ENCODE measurements at regions of chr3 and their contacts with region 1.

Region 1: GRCh38 chr3:117019082-117019713 is 309.6 kb downstream of the TUSC7 start:
- DNase-seq: peak; percentile 72
- ATAC-seq: peak; percentile 85
- H3K4me3 ChIP-seq: no peak overlapping the region
- H3K27ac ChIP-seq: no peak overlapping the region
- H3K4me1 ChIP-seq: no peaks in the 10 kb centered on the region
- H3K27me3 ChIP-seq: peaks cover 51% of the 10 kb centered on the region
- CTCF ChIP-seq: peak; percentile 92

Region 2: DNA sequence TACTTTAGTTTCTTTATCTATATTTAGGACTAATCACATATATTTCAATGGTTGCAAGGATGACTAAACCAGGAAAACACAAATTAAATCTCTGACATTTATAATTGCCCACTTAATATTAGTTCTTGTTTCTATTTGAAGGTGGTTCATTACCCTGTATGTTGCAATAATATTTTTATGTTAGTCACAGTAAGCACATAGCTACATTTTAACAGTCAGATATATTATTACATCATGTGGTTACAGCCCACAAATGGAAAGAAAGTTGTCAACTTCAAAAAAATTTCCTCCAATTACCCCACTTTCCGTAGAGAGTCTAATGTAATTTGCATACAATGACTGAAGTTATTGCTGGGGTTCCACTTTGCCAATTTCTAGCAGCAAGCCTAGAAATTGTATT is 195.0 kb before region 1 on chr3:
- CTCF ChIA-PET with region 1: no interaction called
- POLR2A ChIA-PET with region 1: no interaction called
- intact Hi-C with region 1: no loop called
- DNase-seq: no peak
- ATAC-seq: no peak
- H3K4me3 ChIP-seq: no peak overlapping the region
- H3K27ac ChIP-seq: no peak overlapping the region
- H3K4me1 ChIP-seq: no peaks in the 10 kb centered on the region
- H3K27me3 ChIP-seq: no peaks in the 10 kb centered on the region
- CTCF ChIP-seq: no peak

Region 3: DNA sequence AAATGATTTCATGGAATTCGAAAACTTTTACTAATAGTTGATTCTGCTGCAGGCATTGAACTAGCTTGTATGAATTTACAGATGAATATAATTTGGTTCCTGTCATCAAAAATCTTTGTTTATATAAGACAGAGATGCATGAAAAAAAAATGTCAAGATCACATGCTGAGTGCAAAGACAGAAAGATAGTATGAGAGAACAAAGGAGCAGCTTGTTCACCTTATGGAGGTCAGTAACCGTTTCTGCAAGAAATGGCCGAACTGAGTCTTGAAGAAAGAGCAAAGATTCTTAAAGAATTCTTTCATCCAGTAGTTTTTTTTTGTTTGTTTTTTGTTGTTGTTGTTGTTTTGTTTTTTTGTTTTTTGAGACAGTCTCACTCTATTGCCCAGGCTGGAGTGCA is 141.0 kb after region 1 on chr3:
- CTCF ChIA-PET with region 1: no interaction called
- POLR2A ChIA-PET with region 1: no interaction called
- intact Hi-C with region 1: no loop called
- DNase-seq: no peak
- ATAC-seq: no peak
- H3K4me3 ChIP-seq: no peak overlapping the region
- H3K27ac ChIP-seq: no peak overlapping the region
- H3K4me1 ChIP-seq: no peaks in the 10 kb centered on the region
- H3K27me3 ChIP-seq: no peaks in the 10 kb centered on the region
- CTCF ChIP-seq: no peak

Region 4: DNA sequence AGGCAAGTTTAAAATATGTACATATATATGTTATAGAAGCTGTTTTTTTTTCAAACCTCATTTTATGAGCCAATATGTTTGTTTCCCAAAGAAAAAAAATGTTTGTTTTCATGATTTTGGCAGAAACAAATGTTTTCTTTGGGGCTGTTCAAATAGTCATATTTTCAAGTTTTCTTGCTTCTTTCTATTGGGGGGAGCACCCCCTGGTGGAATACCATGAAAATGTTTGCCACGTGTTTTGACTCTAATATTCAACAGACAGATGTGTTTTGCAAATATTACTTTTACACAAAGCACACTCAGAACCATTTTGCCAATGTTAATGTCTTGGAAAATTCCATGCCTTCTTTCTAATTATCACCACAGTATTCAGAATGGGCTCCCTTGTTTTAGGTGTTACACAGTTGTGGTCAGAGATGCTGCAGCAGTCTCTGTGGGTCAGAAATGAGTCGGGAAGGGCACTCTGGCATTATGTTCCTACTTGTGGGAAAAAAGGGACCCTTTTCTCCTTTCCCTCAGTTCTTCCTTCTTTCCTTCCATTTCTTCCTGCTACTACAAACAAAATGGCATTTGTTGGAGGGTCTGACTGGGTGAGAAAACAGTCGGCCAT is 507.4 kb after region 1 on chr3:
- CTCF ChIA-PET with region 1: no interaction called
- POLR2A ChIA-PET with region 1: no interaction called
- intact Hi-C with region 1: loop called (anchors 5 kb)
- DNase-seq: peak; percentile 17
- ATAC-seq: no peak
- H3K4me3 ChIP-seq: no peak overlapping the region
- H3K27ac ChIP-seq: no peak overlapping the region
- H3K4me1 ChIP-seq: no peaks in the 10 kb centered on the region
- H3K27me3 ChIP-seq: no peaks in the 10 kb centered on the region
- CTCF ChIP-seq: peak; percentile 64

Region 5: DNA sequence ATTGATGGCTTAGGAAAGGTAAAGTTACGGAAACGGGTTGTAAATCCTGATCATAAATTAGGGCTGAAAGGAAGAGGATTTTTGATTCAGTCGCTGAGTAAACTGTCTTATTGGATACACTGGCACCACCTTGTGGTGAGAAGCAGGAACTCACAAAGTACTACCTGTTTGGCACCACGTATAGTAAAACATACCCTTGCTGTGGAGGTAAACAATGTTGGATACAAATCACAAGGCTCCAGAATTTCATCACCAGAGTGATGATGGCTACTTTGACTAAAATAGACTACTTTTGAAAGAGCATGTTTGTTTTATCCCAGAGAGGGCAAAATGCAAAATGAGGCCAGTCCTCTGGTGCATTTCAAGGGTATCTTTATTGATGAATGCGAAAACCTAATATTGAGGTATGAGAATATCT is 1798.6 kb after region 1 on chr3:
- CTCF ChIA-PET with region 1: no interaction called
- POLR2A ChIA-PET with region 1: no interaction called
- intact Hi-C with region 1: loop called (anchors 1 kb)
- DNase-seq: peak; percentile 85
- ATAC-seq: peak; percentile 75
- H3K4me3 ChIP-seq: no peak overlapping the region
- H3K27ac ChIP-seq: no peak overlapping the region
- H3K4me1 ChIP-seq: peaks cover 5% of the 10 kb centered on the region
- H3K27me3 ChIP-seq: no peaks in the 10 kb centered on the region
- CTCF ChIP-seq: peak; percentile 97

Measured in PC-3 (cell line).